ENCODE measurements at regions of chr15 and their contacts with region 1.

Region 1: GRCh38 chr15:79380755-79381497 is 51.2 kb upstream of the MINAR1 start:
- DNase-seq: peak; percentile 65 to 90
- H3K4me3 ChIP-seq: no peak overlapping the region
- CTCF ChIP-seq: peak in 1 of 3 donors; percentile 45
- POLR2A ChIP-seq: no peak

Region 2: GRCh38 chr15:79596051-79596507 is 215.2 kb after region 1 on chr15:
- intact Hi-C with region 1: loop called (anchors 10 kb)
- DNase-seq: no peak
- H3K4me3 ChIP-seq: no peak overlapping the region
- CTCF ChIP-seq: peak in 1 of 3 donors; percentile 63
- POLR2A ChIP-seq: no peak

Region 3: DNA sequence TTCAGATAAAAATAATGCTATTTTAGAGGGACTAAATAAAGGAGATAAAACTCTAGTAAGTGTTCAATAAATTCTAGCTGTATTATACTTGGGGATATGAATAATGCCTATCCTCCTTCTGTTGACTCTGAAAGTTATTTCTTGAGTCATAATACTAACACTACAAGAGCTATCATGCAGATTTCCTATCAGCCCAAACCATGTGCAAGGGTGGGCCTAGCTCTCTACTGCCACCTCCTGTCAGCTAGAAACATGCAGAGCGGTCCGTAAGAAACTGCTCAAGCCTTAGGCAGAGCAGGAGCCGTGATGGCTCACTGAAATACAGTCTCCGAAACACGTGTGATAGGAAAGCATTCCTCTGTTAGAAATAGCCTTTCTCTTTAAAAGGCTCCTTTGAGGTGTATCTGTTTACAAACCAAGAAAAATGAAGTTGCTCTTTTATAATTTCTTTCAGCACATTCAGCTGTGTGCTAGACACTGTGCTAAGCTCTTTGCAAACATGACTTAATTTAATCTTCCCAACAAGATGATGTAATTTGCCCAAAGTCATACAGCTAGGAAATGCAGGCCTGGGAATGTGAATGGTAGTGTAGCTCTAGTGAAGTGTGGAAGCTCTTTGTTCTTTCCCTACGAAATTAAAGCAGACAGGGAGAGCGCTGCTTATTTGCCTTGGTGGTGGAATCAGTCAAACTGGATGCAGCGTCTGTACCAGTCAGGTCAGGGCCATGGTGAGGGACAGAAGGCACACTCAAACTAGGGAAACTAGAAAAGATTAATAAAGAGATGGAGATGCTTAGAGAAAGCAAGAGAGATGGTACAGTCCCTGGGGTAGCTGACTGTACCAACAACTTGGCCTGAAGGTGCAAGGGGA is 472.8 kb after region 1 on chr15:
- intact Hi-C with region 1: loop called (anchors 1 kb)
- DNase-seq: peak in 1 of 2 donors; percentile 47
- H3K4me3 ChIP-seq: no peak overlapping the region
- CTCF ChIP-seq: no peak
- POLR2A ChIP-seq: no peak